ENCODE measurements at regions of chr15 and their contacts with region 1.

Region 1: DNA sequence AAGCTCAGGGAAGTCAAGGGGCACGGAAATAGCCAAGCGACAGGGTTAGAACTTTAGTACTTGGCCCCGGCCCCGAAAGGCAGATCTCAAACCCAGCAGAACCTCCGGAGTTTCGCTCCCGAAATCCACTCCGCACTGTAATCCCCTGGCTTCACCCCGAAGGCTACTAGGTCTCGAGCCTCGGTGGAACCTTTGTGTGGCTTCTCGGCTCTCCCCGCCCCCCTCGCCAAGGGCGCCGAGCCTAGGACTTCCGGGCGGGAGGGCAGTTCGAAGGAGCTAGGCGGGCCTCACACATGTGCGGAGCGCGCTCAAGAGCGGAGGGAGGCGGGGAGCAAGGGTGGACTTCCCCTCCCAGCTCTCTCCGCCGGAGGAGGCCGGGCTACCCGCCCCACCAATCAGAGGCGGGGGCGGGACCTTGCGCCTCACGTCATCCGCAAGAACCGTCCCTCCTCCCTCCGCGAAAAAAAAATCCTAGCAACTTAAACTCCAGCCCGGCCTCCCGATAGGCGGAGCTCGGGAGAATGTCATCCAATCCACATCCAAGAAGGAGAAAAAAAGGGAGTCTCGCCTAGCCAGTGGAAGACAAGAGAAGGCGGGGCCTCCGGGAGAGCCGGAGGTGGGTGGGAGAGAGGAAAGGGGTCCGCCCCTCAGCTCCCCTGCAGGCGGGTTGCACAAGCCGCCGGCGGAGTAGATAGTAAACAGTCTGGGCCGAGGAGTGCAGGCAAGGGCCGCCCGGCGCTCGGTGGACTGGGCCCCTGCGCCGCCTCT is 2.4 kb upstream of the SIN3A start:
- DNase-seq: peak; percentile 90 to 100 (median 96)
- ATAC-seq: peak; percentile 37
- H3K4me3 ChIP-seq: peak overlapping the region; percentile 93
- H3K4me3 Mint-ChIP-seq: peak overlapping the region; percentile 98
- H3K27ac ChIP-seq: peak overlapping the region; percentile 91 to 99
- H3K27ac Mint-ChIP-seq: peak overlapping the region; percentile 96
- H3K4me1 ChIP-seq: peaks cover 43% of the 10 kb centered on the region
- H3K4me1 Mint-ChIP-seq: peaks cover 43% of the 10 kb centered on the region
- H3K27me3 ChIP-seq: no peaks in the 10 kb centered on the region
- H3K27me3 Mint-ChIP-seq: no peaks in the 10 kb centered on the region
- CTCF ChIP-seq: no peak

Region 2: GRCh38 chr15:73991726-73992593 is 1461.9 kb before region 1 on chr15 and contains the start of gene STOML1:
- CTCF ChIA-PET with region 1: no interaction called
- POLR2A ChIA-PET with region 1: interaction called, 4 read pairs
- intact Hi-C with region 1: loop called in 1 of 2 experiments (anchors 5 kb)
- DNase-seq: peak; percentile 85 to 98 (median 94)
- ATAC-seq: peak; percentile 74
- H3K4me3 ChIP-seq: peak within 1 kb of the TSS; percentile 71
- H3K4me3 Mint-ChIP-seq: peak within 1 kb of the TSS; percentile 82
- H3K27ac ChIP-seq: peak within 1 kb of the TSS in 1 of 2 donors; percentile 47
- H3K27ac Mint-ChIP-seq: peak within 1 kb of the TSS; percentile 85
- H3K4me1 ChIP-seq: peaks cover 48% of the 10 kb centered on the region
- H3K4me1 Mint-ChIP-seq: peaks cover 51% of the 10 kb centered on the region
- H3K27me3 ChIP-seq: no peaks in the 10 kb centered on the region
- H3K27me3 Mint-ChIP-seq: no peaks in the 10 kb centered on the region
- CTCF ChIP-seq: peak; percentile 83
- total RNA-seq, gene STOML1: 4.6 to 5.3 TPM

Region 3: GRCh38 chr15:74995241-74995778 is 458.6 kb before region 1 on chr15 and contains the start of gene SCAMP5:
- CTCF ChIA-PET with region 1: no interaction called
- POLR2A ChIA-PET with region 1: no interaction called
- intact Hi-C with region 1: loop called in 1 of 2 experiments (anchors 10 kb)
- DNase-seq: peak; percentile 82 to 96 (median 88)
- ATAC-seq: peak; percentile 99
- H3K4me3 ChIP-seq: peak within 1 kb of the TSS; percentile 75
- H3K4me3 Mint-ChIP-seq: peak within 1 kb of the TSS; percentile 93
- H3K27ac ChIP-seq: no peak within 1 kb of the TSS
- H3K27ac Mint-ChIP-seq: peak within 1 kb of the TSS; percentile 21
- H3K4me1 ChIP-seq: peaks cover 16% of the 10 kb centered on the region
- H3K4me1 Mint-ChIP-seq: peaks cover 22% of the 10 kb centered on the region
- H3K27me3 ChIP-seq: peaks cover 24 to 26% of the 10 kb centered on the region in 2 experiments
- H3K27me3 Mint-ChIP-seq: peaks cover 28% of the 10 kb centered on the region
- CTCF ChIP-seq: no peak
- total RNA-seq, gene SCAMP5: 5.7 to 6.4 TPM

Region 4: DNA sequence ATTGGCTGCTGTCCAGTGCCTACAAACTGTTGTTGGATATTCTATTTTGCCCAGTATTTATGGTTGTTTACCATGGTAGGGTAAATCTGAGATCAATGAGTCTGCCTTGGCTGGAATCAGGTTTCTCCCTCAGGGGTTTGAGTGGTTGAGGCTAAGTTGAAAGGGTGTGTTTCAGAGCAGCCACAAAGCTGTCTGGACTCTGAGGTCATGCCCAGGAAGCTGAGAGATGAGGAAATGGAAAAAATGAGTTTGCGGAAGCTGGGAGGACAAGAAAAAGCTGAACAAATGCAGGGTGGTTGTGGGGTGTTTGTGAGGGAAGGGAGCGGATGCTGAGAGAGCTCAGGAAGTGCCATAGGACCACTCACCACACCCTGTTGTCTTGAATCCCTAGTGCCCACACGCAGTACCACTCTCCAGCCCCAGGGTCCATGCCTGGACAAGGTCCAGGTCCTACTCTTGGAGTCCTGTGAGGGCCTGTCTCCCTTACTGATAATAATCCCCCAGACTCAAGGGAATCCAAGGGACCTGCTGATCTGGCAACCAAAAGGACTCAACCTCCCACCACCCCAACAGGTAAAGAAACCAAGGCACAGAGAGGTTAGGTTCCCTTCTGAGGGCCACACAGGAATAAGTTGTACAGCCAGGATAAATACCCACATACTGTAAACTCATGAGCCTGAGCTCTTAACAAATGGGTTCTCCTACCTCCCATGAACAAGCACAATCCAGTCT is 348.9 kb before region 1 on chr15:
- CTCF ChIA-PET with region 1: no interaction called
- POLR2A ChIA-PET with region 1: no interaction called
- intact Hi-C with region 1: no loop called
- DNase-seq: peak in 3 of 14 experiments; percentile 61 to 73 (median 64)
- ATAC-seq: peak; percentile 46
- H3K4me3 ChIP-seq: no peak overlapping the region
- H3K4me3 Mint-ChIP-seq: no peak overlapping the region
- H3K27ac ChIP-seq: peak overlapping the region in 1 of 2 donors; percentile 17
- H3K27ac Mint-ChIP-seq: peak overlapping the region; percentile 68
- H3K4me1 ChIP-seq: peaks cover 35% of the 10 kb centered on the region
- H3K4me1 Mint-ChIP-seq: peaks cover 11% of the 10 kb centered on the region
- H3K27me3 ChIP-seq: peaks cover 4 to 5% of the 10 kb centered on the region in 2 experiments
- H3K27me3 Mint-ChIP-seq: peaks cover 10% of the 10 kb centered on the region
- CTCF ChIP-seq: no peak

Region 5: GRCh38 chr15:75307778-75308391 is 146.0 kb before region 1 on chr15:
- CTCF ChIA-PET with region 1: no interaction called
- POLR2A ChIA-PET with region 1: no interaction called
- intact Hi-C with region 1: no loop called
- DNase-seq: peak in 4 of 14 experiments; percentile 2 to 17 (median 10)
- ATAC-seq: peak; percentile 49
- H3K4me3 ChIP-seq: no peak overlapping the region
- H3K4me3 Mint-ChIP-seq: no peak overlapping the region
- H3K27ac ChIP-seq: no peak overlapping the region
- H3K27ac Mint-ChIP-seq: no peak overlapping the region
- H3K4me1 ChIP-seq: no peaks in the 10 kb centered on the region
- H3K4me1 Mint-ChIP-seq: no peaks in the 10 kb centered on the region
- H3K27me3 ChIP-seq: peaks cover 0 to 9% of the 10 kb centered on the region in 2 experiments
- H3K27me3 Mint-ChIP-seq: peaks cover 43% of the 10 kb centered on the region
- CTCF ChIP-seq: no peak

Region 6: GRCh38 chr15:75347222-75347878 is 106.5 kb before region 1 on chr15:
- CTCF ChIA-PET with region 1: no interaction called
- POLR2A ChIA-PET with region 1: interaction called, 13 read pairs
- intact Hi-C with region 1: no loop called
- DNase-seq: peak; percentile 31 to 83 (median 57)
- ATAC-seq: peak; percentile 67
- H3K4me3 ChIP-seq: peak overlapping the region; percentile 86
- H3K4me3 Mint-ChIP-seq: peak overlapping the region; percentile 89
- H3K27ac ChIP-seq: peak overlapping the region in 1 of 2 donors; percentile 43
- H3K27ac Mint-ChIP-seq: peak overlapping the region; percentile 83
- H3K4me1 ChIP-seq: peaks cover 51% of the 10 kb centered on the region
- H3K4me1 Mint-ChIP-seq: peaks cover 35% of the 10 kb centered on the region
- H3K27me3 ChIP-seq: no peaks in the 10 kb centered on the region
- H3K27me3 Mint-ChIP-seq: no peaks in the 10 kb centered on the region
- CTCF ChIP-seq: no peak

Region 7: GRCh38 chr15:75431682-75432081 is 22.2 kb before region 1 on chr15:
- CTCF ChIA-PET with region 1: interaction called, 4 read pairs
- POLR2A ChIA-PET with region 1: interaction called, 10 read pairs
- intact Hi-C with region 1: no loop called
- DNase-seq: no peak
- ATAC-seq: no peak
- H3K4me3 ChIP-seq: no peak overlapping the region
- H3K4me3 Mint-ChIP-seq: no peak overlapping the region
- H3K27ac ChIP-seq: no peak overlapping the region
- H3K27ac Mint-ChIP-seq: no peak overlapping the region
- H3K4me1 ChIP-seq: peaks cover 14% of the 10 kb centered on the region
- H3K4me1 Mint-ChIP-seq: peaks cover 41% of the 10 kb centered on the region
- H3K27me3 ChIP-seq: no peaks in the 10 kb centered on the region
- H3K27me3 Mint-ChIP-seq: no peaks in the 10 kb centered on the region
- CTCF ChIP-seq: no peak

Region 8: GRCh38 chr15:75578948-75579920 is 125.3 kb after region 1 on chr15 and contains the start of gene PTPN9:
- CTCF ChIA-PET with region 1: interaction called, 6 read pairs
- POLR2A ChIA-PET with region 1: interaction called, 51 read pairs
- intact Hi-C with region 1: loop called in 1 of 2 experiments (anchors 5 kb)
- DNase-seq: peak; percentile 46 to 82 (median 64)
- ATAC-seq: peak; percentile 82
- H3K4me3 ChIP-seq: peak within 1 kb of the TSS; percentile 79
- H3K4me3 Mint-ChIP-seq: peak within 1 kb of the TSS; percentile 97
- H3K27ac ChIP-seq: peak within 1 kb of the TSS; percentile 50 to 70
- H3K27ac Mint-ChIP-seq: peak within 1 kb of the TSS; percentile 82
- H3K4me1 ChIP-seq: peaks cover 22% of the 10 kb centered on the region
- H3K4me1 Mint-ChIP-seq: peaks cover 26% of the 10 kb centered on the region
- H3K27me3 ChIP-seq: no peaks in the 10 kb centered on the region
- H3K27me3 Mint-ChIP-seq: no peaks in the 10 kb centered on the region
- CTCF ChIP-seq: peak; percentile 66
- total RNA-seq, gene PTPN9: 8.1 to 8.2 TPM

Region 9: GRCh38 chr15:75639709-75640482 is 186.0 kb after region 1 on chr15 and contains the start of gene IMP3:
- CTCF ChIA-PET with region 1: interaction called, 14 read pairs
- POLR2A ChIA-PET with region 1: interaction called, 294 read pairs
- intact Hi-C with region 1: loop called (anchors 1 to 2 kb)
- DNase-seq: peak; percentile 84 to 97 (median 90)
- ATAC-seq: peak; percentile 90
- H3K4me3 ChIP-seq: peak within 1 kb of the TSS; percentile 95
- H3K4me3 Mint-ChIP-seq: peak within 1 kb of the TSS; percentile 89
- H3K27ac ChIP-seq: peak within 1 kb of the TSS; percentile 92
- H3K27ac Mint-ChIP-seq: peak within 1 kb of the TSS; percentile 85
- H3K4me1 ChIP-seq: peaks cover 56% of the 10 kb centered on the region
- H3K4me1 Mint-ChIP-seq: peaks cover 35% of the 10 kb centered on the region
- H3K27me3 ChIP-seq: no peaks in the 10 kb centered on the region
- H3K27me3 Mint-ChIP-seq: no peaks in the 10 kb centered on the region
- CTCF ChIP-seq: no peak
- total RNA-seq, gene IMP3: 48.4 to 50.4 TPM